ENCODE measurements at regions of chr12 and their contacts with region 1.

Region 1: GRCh38 chr12:51814311-51815088 is 34.0 kb downstream of the FIGNL2 start:
- DNase-seq: peak in 1 of 2 experiments; percentile 86
- H3K4me3 ChIP-seq: peak overlapping the region; percentile 42 to 79 (median 60)
- H3K27ac ChIP-seq: no peak overlapping the region
- H3K4me1 ChIP-seq: peaks cover 0 to 8% (median 2%) of the 10 kb centered on the region in 4 experiments; a peak in 5 of 7 replicates
- H3K27me3 ChIP-seq: peaks cover 0 to 43% (median 27%) of the 10 kb centered on the region in 4 experiments; a peak in 5 of 7 replicates
- CTCF ChIP-seq: peak; percentile 79 to 93 (median 83)
- EP300 ChIP-seq: no peak
- POLR2A ChIP-seq: no peak; a peak in 1 of 3 replicates
- RAD21 ChIP-seq: peak; percentile 57 to 74; a peak in 3 of 4 replicates

Region 2: GRCh38 chr12:51323991-51324930 is 490.2 kb before region 1 on chr12 and contains the start of gene BIN2:
- CTCF ChIA-PET with region 1: no interaction called
- POLR2A ChIA-PET with region 1: no interaction called
- DNase-seq: no peak
- H3K4me3 ChIP-seq: no peak within 1 kb of the TSS
- H3K27ac ChIP-seq: no peak within 1 kb of the TSS
- H3K4me1 ChIP-seq: peaks cover 2 to 10% (median 4%) of the 10 kb centered on the region in 4 experiments; a peak in 6 of 7 replicates
- H3K27me3 ChIP-seq: no peaks in the 10 kb centered on the region; a peak in 1 of 7 replicates
- CTCF ChIP-seq: no peak
- EP300 ChIP-seq: no peak
- POLR2A ChIP-seq: no peak
- RAD21 ChIP-seq: no peak
- total RNA-seq, gene BIN2: not detected in 2 replicates

Region 3: DNA sequence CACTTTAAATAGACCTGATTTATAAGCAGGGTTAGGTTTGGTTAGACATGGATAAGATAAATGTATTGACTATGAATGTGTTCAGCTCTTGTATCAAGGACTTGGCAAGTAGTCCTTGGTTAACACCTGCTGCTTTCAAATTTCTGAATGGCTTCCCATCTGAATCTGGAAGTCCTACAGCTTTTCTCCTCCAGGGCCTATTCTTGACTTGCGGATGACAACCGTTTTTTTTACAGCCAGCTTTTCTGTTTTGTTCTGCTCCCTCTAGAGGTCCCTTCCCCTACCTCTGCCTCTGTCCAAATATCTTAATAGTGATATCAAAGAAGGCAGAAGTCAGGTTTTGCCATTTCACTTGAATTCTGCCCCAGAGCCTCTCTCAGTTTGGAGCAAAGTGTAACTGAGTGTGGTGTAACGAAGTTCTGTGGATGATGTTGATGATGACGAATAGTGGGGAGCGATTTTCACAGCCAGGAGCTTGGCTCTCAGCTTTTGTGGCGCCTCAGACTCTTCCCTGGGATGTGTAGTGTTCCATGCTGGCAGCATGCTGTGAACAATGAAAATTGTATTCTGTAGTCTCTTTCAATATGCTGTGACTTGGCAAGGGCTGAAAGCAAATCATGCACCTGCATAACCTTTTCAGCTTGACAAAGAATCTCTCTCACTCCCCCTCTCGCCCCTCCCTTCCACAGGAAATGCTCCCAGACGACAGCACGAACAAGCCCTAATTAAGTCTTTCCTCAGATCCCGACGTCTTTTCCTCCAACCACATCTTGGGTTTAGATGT is 394.9 kb before region 1 on chr12:
- CTCF ChIA-PET with region 1: interaction called, 10 read pairs
- POLR2A ChIA-PET with region 1: no interaction called
- DNase-seq: no peak
- H3K4me3 ChIP-seq: 0 out of 8 replicates have a peak overlapping the region, but pooled peaks of 1 of the 4 experiments have one; percentile 14
- H3K27ac ChIP-seq: no peak overlapping the region
- H3K4me1 ChIP-seq: peaks cover 0 to 12% (median 7%) of the 10 kb centered on the region in 4 experiments; a peak in 4 of 7 replicates
- H3K27me3 ChIP-seq: no peaks in the 10 kb centered on the region
- CTCF ChIP-seq: peak in 2 of 3 experiments; percentile 12 to 38; a peak in 3 of 4 replicates
- EP300 ChIP-seq: no peak
- POLR2A ChIP-seq: no peak
- RAD21 ChIP-seq: 0 out of 4 replicates have a peak, but pooled peaks of 1 of the 2 experiments have one; percentile 5

Region 4: DNA sequence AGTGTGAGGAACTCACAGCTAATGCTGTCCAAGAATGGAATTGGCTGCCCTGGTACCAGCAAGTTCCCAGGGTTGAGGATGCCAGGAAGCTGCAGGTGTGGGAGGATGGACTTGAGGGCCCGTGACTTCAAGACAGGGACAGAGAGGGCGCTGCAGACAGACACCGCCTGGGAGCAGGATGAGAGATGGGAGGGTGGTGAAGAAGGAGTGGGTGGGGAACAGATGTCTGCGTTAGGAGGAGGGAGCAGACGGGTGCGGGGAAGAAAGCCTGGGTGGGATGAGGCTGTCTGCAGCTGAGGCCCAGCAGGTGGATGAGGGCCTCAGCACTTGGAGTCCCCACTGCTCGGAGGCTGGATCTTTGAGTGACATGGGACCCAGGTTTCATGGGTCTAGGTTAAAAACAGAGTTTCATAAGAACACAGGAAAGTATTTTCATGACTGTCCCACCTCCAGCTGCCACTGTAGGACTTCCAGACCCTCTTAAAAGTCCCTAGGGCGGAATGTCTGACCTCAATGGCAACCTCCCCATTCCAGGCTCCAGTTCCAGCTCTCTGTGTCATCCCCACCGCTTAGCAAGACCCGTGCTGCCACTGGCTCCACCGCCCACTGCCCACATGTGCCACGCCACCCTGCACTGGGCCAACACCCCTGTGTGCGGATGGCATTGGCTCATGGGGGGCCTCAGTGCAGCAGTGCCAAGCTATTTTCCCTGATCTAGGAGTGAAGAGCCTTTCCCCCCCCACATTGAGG is 293.7 kb before region 1 on chr12:
- CTCF ChIA-PET with region 1: no interaction called
- POLR2A ChIA-PET with region 1: no interaction called
- DNase-seq: peak in 1 of 2 experiments; percentile 52
- H3K4me3 ChIP-seq: no peak overlapping the region
- H3K27ac ChIP-seq: no peak overlapping the region
- H3K4me1 ChIP-seq: no peaks in the 10 kb centered on the region
- H3K27me3 ChIP-seq: no peaks in the 10 kb centered on the region; a peak in 2 of 7 replicates
- CTCF ChIP-seq: peak; percentile 55 to 82 (median 73)
- EP300 ChIP-seq: no peak
- POLR2A ChIP-seq: no peak
- RAD21 ChIP-seq: peak; percentile 58 to 62

Region 5: DNA sequence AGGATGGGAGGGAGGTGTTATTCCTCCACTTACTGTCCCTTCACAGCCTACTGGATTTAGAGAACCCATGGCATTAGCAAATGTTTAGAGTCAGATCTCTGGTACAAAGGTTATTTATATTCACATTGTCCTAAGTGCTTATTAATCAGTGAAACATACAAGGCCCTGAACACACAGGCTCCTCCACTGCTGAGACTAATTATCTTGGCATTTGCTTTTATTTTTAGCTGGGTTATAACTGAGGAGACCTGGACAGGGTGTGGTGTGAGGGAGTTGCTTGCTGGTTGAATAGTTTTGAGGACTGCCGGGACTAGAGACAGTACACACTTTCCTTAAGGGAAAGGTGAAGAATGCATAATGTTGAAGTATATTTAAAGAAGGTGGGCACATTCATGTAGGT is 43.5 kb before region 1 on chr12:
- CTCF ChIA-PET with region 1: no interaction called
- POLR2A ChIA-PET with region 1: no interaction called
- DNase-seq: no peak
- H3K4me3 ChIP-seq: no peak overlapping the region
- H3K27ac ChIP-seq: no peak overlapping the region
- H3K4me1 ChIP-seq: no peaks in the 10 kb centered on the region
- H3K27me3 ChIP-seq: no peaks in the 10 kb centered on the region
- CTCF ChIP-seq: no peak
- EP300 ChIP-seq: no peak
- POLR2A ChIP-seq: no peak
- RAD21 ChIP-seq: no peak

Region 6: GRCh38 chr12:51801027-51801426 is 13.5 kb before region 1 on chr12:
- CTCF ChIA-PET with region 1: interaction called, 30 read pairs
- POLR2A ChIA-PET with region 1: interaction called, 3 read pairs
- DNase-seq: no peak
- H3K4me3 ChIP-seq: no peak overlapping the region
- H3K27ac ChIP-seq: no peak overlapping the region
- H3K4me1 ChIP-seq: no peaks in the 10 kb centered on the region
- H3K27me3 ChIP-seq: no peaks in the 10 kb centered on the region
- CTCF ChIP-seq: no peak
- EP300 ChIP-seq: no peak
- POLR2A ChIP-seq: no peak
- RAD21 ChIP-seq: no peak

Region 7: DNA sequence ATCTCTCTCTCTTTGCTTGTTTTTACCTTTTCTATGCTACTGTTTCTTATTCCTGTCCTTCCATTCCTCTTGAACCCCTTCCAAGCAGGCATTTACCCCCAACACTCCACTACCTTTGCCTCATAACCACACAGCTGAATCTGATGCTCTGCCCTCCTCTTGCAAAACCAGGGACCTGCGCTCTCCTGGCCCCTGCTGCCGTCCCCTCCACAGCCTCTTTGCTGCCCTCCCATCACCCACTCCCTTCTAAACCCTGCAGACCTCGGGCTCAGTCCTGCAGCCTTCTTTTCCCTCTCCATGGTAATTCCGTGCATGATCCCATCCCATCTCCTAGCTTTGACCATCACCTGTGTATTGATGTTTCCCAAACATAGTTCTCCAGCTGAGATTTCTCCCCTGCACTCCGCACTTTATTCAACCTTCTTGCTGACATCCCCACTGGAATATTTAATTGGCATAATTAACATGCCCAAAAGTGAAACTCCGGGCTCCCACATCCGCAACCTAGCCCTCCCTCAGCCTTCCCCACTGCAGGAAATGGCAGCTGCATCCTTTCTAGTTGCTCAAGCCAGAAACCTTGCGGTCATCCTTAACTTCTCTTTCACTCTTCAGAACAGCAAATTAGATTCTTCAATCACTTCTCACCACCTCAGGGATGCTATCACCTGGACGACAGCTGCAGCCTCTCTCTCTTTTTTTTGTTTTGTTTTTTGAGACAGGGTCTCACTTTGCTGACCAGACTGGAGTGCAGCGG is 18.0 kb after region 1 on chr12:
- CTCF ChIA-PET with region 1: interaction called, 49 read pairs
- POLR2A ChIA-PET with region 1: interaction called, 14 read pairs
- DNase-seq: no peak
- H3K4me3 ChIP-seq: no peak overlapping the region
- H3K27ac ChIP-seq: no peak overlapping the region
- H3K4me1 ChIP-seq: peaks cover 19 to 58% (median 36%) of the 10 kb centered on the region in 4 experiments
- H3K27me3 ChIP-seq: peaks cover 0 to 3% (median 0%) of the 10 kb centered on the region in 4 experiments; a peak in 1 of 7 replicates
- CTCF ChIP-seq: no peak
- EP300 ChIP-seq: no peak
- POLR2A ChIP-seq: no peak
- RAD21 ChIP-seq: no peak

Region 8: GRCh38 chr12:51855596-51856428 is 41.3 kb after region 1 on chr12:
- CTCF ChIA-PET with region 1: interaction called, 10 read pairs
- POLR2A ChIA-PET with region 1: interaction called, 4 read pairs
- DNase-seq: peak in 1 of 2 experiments; percentile 84
- H3K4me3 ChIP-seq: peak overlapping the region; percentile 1 to 59 (median 42); a peak in 7 of 8 replicates
- H3K27ac ChIP-seq: peak overlapping the region; percentile 46; the same call in 1 of the 2 replicates
- H3K4me1 ChIP-seq: peaks cover 0 to 11% (median 2%) of the 10 kb centered on the region in 4 experiments; a peak in 6 of 7 replicates
- H3K27me3 ChIP-seq: peaks cover under 1 to 25% (median 18%) of the 10 kb centered on the region in 4 experiments
- CTCF ChIP-seq: no peak
- EP300 ChIP-seq: 0 out of 3 replicates have a peak, but pooled peaks of 1 of the 2 experiments have one; percentile 37
- POLR2A ChIP-seq: peak in 1 of 2 experiments; percentile 57; a peak in 1 of 3 replicates
- RAD21 ChIP-seq: peak in 1 of 2 experiments; percentile 17; a peak in 1 of 4 replicates

Region 9: DNA sequence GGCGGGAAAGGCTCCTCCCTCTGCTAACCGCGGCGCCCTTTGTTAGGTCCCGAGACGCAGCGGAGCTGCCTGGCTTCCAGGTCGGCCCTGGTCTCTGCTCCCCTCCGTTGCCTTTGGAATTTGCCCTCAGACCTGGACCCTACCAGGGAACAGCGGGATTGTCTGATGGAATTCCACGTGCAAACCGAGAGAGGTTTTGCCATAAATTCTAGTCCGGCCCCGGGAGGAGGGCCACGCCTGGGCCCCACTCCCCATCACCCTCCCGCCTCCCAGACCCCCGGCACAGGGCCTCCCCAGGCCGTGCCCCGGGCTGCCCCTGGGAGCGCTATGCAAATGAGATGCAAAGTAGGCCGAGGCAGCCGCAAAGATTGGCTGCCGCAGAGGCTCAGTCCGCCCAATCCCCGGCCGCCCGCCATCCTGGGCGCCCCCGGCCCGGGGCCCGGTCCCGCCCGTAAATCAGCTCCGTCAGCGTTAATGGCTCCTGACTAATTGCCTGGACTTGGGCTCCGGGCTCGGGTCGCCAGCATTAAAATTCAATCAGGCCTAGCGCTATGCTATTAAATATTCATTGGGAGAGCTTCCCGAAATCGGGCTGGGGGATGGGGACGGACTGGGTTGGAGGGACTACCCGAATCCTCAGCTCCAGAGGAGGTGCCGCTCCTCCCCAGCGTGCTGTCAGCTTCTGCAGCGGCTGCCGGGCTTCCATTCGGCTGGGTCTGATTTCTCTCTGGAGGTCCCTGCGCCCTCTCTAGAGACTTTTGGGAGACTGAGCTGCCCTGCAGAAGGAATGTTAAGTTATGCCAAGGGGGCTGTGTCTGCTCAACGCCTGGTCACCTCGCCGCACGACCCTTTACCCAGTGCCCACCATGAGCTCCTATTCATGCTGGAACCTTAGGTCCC is 49.7 kb after region 1 on chr12:
- CTCF ChIA-PET with region 1: interaction called, 139 read pairs
- POLR2A ChIA-PET with region 1: interaction called, 12 read pairs
- DNase-seq: peak in 1 of 2 experiments; percentile 89
- H3K4me3 ChIP-seq: peak overlapping the region; percentile 41 to 73 (median 66)
- H3K27ac ChIP-seq: peak overlapping the region; percentile 75
- H3K4me1 ChIP-seq: peaks cover 16 to 36% (median 30%) of the 10 kb centered on the region in 4 experiments
- H3K27me3 ChIP-seq: peaks cover 0 to 23% (median 21%) of the 10 kb centered on the region in 4 experiments; a peak in 5 of 7 replicates
- CTCF ChIP-seq: no peak
- EP300 ChIP-seq: no peak
- POLR2A ChIP-seq: peak in 1 of 2 experiments; percentile 85; a peak in 2 of 3 replicates
- RAD21 ChIP-seq: no peak

Region 10: DNA sequence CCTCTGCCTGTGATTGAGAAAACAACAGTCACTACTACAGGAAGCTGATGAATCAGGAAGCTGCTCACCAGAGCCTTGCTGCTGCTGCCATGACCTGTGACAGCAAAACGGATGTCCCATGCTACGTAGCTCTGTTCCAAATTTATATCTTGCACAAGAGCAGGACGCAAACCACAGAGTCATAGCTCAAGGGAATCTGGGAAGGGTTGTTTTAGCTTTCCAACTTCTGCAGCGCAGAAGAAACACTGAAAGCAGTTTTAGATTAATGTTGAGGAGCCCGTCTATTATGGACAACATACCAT is 71.5 kb after region 1 on chr12:
- CTCF ChIA-PET with region 1: interaction called, 11 read pairs
- POLR2A ChIA-PET with region 1: no interaction called
- DNase-seq: no peak
- H3K4me3 ChIP-seq: no peak overlapping the region
- H3K27ac ChIP-seq: no peak overlapping the region
- H3K4me1 ChIP-seq: peaks cover 0 to 12% (median 5%) of the 10 kb centered on the region in 4 experiments; a peak in 6 of 7 replicates
- H3K27me3 ChIP-seq: peaks cover 0 to 10% (median 6%) of the 10 kb centered on the region in 4 experiments; a peak in 3 of 7 replicates
- CTCF ChIP-seq: no peak
- EP300 ChIP-seq: no peak
- POLR2A ChIP-seq: no peak
- RAD21 ChIP-seq: no peak

Measured in H1 (cell line).